Activated CD8-positive, alpha-beta T cell treated with anti-CD3 and anti-CD28 coated beads for 36 hours (primary cell): ENCODE measurements at regions of chr22 and their contacts with region 1.

Region 1: DNA sequence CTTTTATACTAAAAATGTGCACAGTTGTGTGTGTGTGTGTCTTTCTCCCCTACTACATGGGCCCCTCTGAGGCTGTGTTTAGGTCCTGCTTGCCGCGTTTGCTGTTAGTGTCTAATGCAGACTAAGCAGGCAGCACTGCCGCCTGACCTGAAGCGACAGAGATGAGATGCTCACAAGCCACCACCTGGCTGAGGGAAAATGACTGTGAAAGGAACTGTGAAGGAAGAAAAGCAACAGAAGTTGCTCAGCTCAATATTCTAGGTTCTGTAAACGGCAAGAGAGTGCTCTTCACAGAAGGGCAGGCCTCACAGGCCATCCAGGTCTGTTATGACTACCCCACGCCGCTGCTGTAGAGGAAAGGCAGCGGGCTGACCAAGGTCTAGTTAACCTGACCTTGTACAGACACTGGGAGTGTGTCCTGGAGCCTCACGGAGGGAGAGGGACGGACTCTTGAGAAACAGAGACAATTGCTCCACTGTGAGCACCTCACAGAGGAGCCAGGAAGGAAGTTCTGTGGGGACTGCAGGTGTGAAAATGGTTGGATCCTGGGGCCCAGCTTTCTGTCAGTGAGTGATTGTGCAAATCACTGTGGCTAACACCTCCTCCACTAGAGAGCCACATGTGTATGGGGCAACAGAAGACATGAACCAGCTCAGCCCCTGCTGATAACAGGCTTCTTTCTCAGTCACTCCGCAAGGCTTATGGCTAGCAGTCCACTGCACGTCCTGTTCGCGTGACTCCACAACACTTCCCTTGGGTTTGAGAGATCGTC is 31.3 kb upstream of the YPEL1 start:
- DNase-seq: peak; percentile 90
- ATAC-seq: peak; percentile 83
- H3K4me3 Mint-ChIP-seq: peak overlapping the region; percentile 34
- H3K27ac Mint-ChIP-seq: peak overlapping the region; percentile 89
- H3K4me1 Mint-ChIP-seq: peaks cover 65% of the 10 kb centered on the region
- H3K27me3 Mint-ChIP-seq: no peaks in the 10 kb centered on the region
- CTCF ChIP-seq: no peak

Region 2: GRCh38 chr22:21719024-21719423 is 47.9 kb before region 1 on chr22:
- CTCF ChIA-PET with region 1: no interaction called
- POLR2A ChIA-PET with region 1: no interaction called
- intact Hi-C with region 1: no loop called
- DNase-seq: no peak
- ATAC-seq: no peak
- H3K4me3 Mint-ChIP-seq: no peak overlapping the region
- H3K27ac Mint-ChIP-seq: no peak overlapping the region
- H3K4me1 Mint-ChIP-seq: peaks cover 2% of the 10 kb centered on the region
- H3K27me3 Mint-ChIP-seq: no peaks in the 10 kb centered on the region
- CTCF ChIP-seq: no peak

Region 3: DNA sequence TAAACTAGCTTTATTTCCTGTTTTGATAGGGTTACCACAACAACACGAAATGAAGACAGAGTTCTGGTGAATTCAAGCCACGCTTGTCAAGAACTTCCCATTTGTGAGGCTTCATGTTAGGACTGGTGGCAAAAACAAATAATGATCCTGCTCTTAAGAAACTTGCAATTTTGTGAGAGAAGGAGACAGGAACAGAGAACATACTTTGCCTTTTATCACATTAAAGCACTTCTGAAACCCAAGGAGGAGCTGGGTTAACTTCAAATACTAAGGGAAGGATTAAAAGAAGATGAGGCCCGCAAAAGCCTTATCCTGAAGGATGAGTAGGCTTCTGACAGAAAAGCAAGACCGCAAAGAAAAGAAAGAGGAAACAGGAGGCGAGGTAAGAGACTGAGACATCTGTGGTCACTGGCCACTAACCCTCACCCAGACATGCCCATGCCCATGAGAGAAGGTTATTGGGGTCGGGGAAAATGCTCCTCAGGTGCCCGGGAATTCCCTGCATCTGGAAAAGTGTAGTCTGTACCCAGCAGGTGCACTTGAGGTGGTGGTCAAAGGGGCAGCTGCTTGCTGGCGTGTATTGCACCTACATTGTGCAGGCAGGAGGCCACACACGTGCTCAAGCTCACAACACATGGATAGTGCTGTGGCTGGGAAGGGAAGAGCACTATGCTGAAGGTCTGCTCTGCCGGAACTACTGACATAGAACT is 50.1 kb after region 1 on chr22:
- CTCF ChIA-PET with region 1: interaction called, 3 read pairs
- POLR2A ChIA-PET with region 1: interaction called, 3 read pairs
- intact Hi-C with region 1: loop called (anchors 10 kb)
- DNase-seq: peak; percentile 37
- ATAC-seq: peak; percentile 88
- H3K4me3 Mint-ChIP-seq: peak overlapping the region; percentile 46
- H3K27ac Mint-ChIP-seq: peak overlapping the region; percentile 84
- H3K4me1 Mint-ChIP-seq: peaks cover 64% of the 10 kb centered on the region
- H3K27me3 Mint-ChIP-seq: no peaks in the 10 kb centered on the region
- CTCF ChIP-seq: no peak

Region 4: GRCh38 chr22:21861264-21861848 is 94.5 kb after region 1 on chr22:
- CTCF ChIA-PET with region 1: interaction called, 4 read pairs
- POLR2A ChIA-PET with region 1: interaction called, 10 read pairs
- intact Hi-C with region 1: loop called (anchors 5 kb)
- DNase-seq: no peak
- ATAC-seq: no peak
- H3K4me3 Mint-ChIP-seq: no peak overlapping the region
- H3K27ac Mint-ChIP-seq: no peak overlapping the region
- H3K4me1 Mint-ChIP-seq: peaks cover 78% of the 10 kb centered on the region
- H3K27me3 Mint-ChIP-seq: no peaks in the 10 kb centered on the region
- CTCF ChIP-seq: no peak

Region 5: GRCh38 chr22:21902296-21903087 is 135.6 kb after region 1 on chr22:
- CTCF ChIA-PET with region 1: no interaction called
- POLR2A ChIA-PET with region 1: no interaction called
- intact Hi-C with region 1: no loop called
- DNase-seq: no peak
- ATAC-seq: no peak
- H3K4me3 Mint-ChIP-seq: no peak overlapping the region
- H3K27ac Mint-ChIP-seq: no peak overlapping the region
- H3K4me1 Mint-ChIP-seq: no peaks in the 10 kb centered on the region
- H3K27me3 Mint-ChIP-seq: peaks cover 2% of the 10 kb centered on the region
- CTCF ChIP-seq: no peak

Region 6: GRCh38 chr22:21917181-21917958 is 150.5 kb after region 1 on chr22:
- CTCF ChIA-PET with region 1: no interaction called
- POLR2A ChIA-PET with region 1: no interaction called
- intact Hi-C with region 1: no loop called
- DNase-seq: no peak
- ATAC-seq: no peak
- H3K4me3 Mint-ChIP-seq: no peak overlapping the region
- H3K27ac Mint-ChIP-seq: no peak overlapping the region
- H3K4me1 Mint-ChIP-seq: no peaks in the 10 kb centered on the region
- H3K27me3 Mint-ChIP-seq: no peaks in the 10 kb centered on the region
- CTCF ChIP-seq: no peak